ENCODE measurements at regions of chr4 and their contacts with region 1.

Region 1: GRCh38 chr4:147361726-147362125 is 119.2 kb upstream of the EDNRA start:
- DNase-seq: peak; percentile 92
- ATAC-seq: peak; percentile 87
- H3K4me3 ChIP-seq: no peak overlapping the region
- H3K27ac ChIP-seq: peak overlapping the region; percentile 82
- H3K4me1 ChIP-seq: peaks cover 28% of the 10 kb centered on the region
- H3K27me3 ChIP-seq: no peaks in the 10 kb centered on the region
- CTCF ChIP-seq: no peak
- POLR2A ChIP-seq: no peak
- RAD21 ChIP-seq: no peak

Region 2: DNA sequence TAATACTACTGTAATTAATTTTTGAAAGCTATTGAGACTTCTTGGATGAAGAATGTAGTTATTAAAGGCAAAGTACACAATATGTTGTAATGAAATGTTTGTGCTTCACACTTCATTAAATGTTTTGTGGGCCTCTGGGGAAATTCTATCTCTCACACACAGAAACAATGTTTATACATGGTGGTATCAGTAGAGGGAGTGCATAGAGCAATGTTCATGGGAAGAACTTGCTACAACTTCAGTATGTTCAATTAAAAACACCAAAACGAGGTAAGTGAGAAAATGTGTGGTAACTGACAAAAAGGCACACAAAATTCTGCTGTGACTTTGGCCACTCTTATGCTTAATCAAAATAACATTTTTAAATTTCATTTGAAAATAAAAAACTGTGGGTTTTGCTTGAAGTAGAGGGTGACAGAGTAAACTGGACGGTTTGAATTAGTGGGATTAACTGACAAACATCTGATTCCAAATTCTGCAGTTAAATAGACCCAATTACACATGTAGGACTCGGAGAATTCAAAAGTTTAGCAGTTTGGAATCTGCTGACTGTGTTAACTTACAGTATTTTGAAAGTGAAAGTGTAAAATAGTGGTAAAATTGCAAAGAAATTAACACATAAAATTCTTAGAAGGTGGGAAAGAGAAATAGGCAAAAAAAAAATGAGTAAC is 304.7 kb before region 1 on chr4:
- CTCF ChIA-PET with region 1: no interaction called
- POLR2A ChIA-PET with region 1: no interaction called
- dilution Hi-C with region 1: no loop called
- in situ Hi-C with region 1: no loop called
- intact Hi-C with region 1: no loop called
- DNase-seq: peak; percentile 14
- ATAC-seq: peak; percentile 70
- H3K4me3 ChIP-seq: peak overlapping the region; percentile 48
- H3K27ac ChIP-seq: peak overlapping the region; percentile 54; the same call in 1 of the 2 replicates
- H3K4me1 ChIP-seq: peaks cover 9% of the 10 kb centered on the region
- H3K27me3 ChIP-seq: no peaks in the 10 kb centered on the region
- CTCF ChIP-seq: peak; percentile 13; the same call in 1 of the 2 replicates
- POLR2A ChIP-seq: no peak
- RAD21 ChIP-seq: no peak

Region 3: GRCh38 chr4:147201016-147201415 is 160.7 kb before region 1 on chr4:
- CTCF ChIA-PET with region 1: no interaction called
- POLR2A ChIA-PET with region 1: no interaction called
- dilution Hi-C with region 1: no loop called
- in situ Hi-C with region 1: no loop called
- intact Hi-C with region 1: loop called (anchors 5 kb)
- DNase-seq: peak; percentile 84
- ATAC-seq: peak; percentile 89
- H3K4me3 ChIP-seq: no peak overlapping the region
- H3K27ac ChIP-seq: no peak overlapping the region
- H3K4me1 ChIP-seq: peaks cover 11% of the 10 kb centered on the region
- H3K27me3 ChIP-seq: no peaks in the 10 kb centered on the region
- CTCF ChIP-seq: no peak
- POLR2A ChIP-seq: no peak
- RAD21 ChIP-seq: no peak